Activated naive CD4-positive, alpha-beta T cell treated with anti-CD3 and anti-CD28 coated beads for 36 hours (primary cell): ENCODE measurements at regions of chr18 and their contacts with region 1.

Region 1: GRCh38 chr18:45974088-45974536 is 7.0 kb upstream of the EPG5 start:
- DNase-seq: peak; percentile 91
- H3K4me3 Mint-ChIP-seq: no peak overlapping the region
- H3K27ac Mint-ChIP-seq: peak overlapping the region; percentile 78
- H3K4me1 Mint-ChIP-seq: peaks cover 14% of the 10 kb centered on the region
- H3K27me3 Mint-ChIP-seq: no peaks in the 10 kb centered on the region

Region 2: GRCh38 chr18:45621061-45621511 is 353.0 kb before region 1 on chr18:
- CTCF ChIA-PET with region 1: no interaction called
- intact Hi-C with region 1: loop called (anchors 1 kb)
- DNase-seq: peak; percentile 51
- H3K4me3 Mint-ChIP-seq: no peak overlapping the region
- H3K27ac Mint-ChIP-seq: no peak overlapping the region
- H3K4me1 Mint-ChIP-seq: no peaks in the 10 kb centered on the region
- H3K27me3 Mint-ChIP-seq: no peaks in the 10 kb centered on the region

Region 3: DNA sequence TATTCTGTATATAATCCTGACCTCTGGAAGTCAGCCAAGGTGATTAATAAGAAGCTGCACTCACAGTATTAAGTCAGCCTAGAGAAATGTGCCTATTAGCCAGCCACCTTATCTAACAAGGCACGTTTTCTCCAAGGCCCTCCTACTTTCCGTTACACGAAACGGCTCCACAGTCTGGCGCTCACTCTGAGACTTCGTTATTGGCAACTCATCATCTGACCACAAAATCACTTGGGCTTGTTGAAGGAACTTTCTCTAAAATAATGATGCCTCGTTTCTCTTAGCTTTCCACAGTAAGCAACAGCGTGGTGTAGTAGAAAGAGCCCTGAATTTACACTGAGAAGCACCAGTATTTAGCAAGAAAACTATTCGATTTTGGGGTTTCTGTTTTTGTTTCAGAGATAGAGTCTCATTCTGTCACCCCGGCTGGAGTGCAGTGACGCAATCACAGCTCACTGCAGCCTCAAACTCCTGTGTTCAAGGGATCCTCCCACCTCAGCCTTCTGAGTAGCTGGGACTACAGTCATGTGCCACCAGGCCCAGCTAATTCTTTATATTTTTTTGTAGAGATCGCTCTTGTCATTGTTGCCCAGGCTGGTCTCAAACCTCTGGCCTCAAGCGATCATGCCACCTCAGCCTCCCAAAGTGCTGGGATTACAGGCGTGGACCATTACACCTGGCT is 303.7 kb before region 1 on chr18:
- CTCF ChIA-PET with region 1: interaction called, 18 read pairs
- intact Hi-C with region 1: loop called (anchors 1 kb)
- DNase-seq: peak; percentile 76
- H3K4me3 Mint-ChIP-seq: peak overlapping the region; percentile 56
- H3K27ac Mint-ChIP-seq: peak overlapping the region; percentile 81
- H3K4me1 Mint-ChIP-seq: peaks cover 61% of the 10 kb centered on the region
- H3K27me3 Mint-ChIP-seq: no peaks in the 10 kb centered on the region

Region 4: DNA sequence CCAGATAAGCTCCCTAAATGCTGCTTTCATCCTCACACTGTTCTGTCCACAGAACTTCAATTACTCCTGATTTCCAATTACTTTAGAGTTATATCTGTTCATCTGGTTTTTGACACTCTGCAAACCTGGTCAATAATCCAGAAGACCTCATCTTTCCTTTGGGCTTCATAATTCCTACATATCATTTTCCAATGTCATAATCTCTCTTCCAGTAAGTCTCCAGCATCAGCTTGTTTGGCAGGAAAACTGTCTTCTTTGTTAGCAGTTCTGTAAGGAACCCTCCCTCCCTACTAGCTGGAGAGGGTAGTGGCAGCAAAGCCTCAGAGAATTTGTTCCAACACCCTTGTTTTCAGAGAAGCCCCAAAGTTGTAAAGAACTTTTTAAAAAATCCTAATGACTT is 262.1 kb before region 1 on chr18:
- CTCF ChIA-PET with region 1: no interaction called
- intact Hi-C with region 1: no loop called
- DNase-seq: no peak
- H3K4me3 Mint-ChIP-seq: no peak overlapping the region
- H3K27ac Mint-ChIP-seq: no peak overlapping the region
- H3K4me1 Mint-ChIP-seq: no peaks in the 10 kb centered on the region
- H3K27me3 Mint-ChIP-seq: no peaks in the 10 kb centered on the region

Region 5: DNA sequence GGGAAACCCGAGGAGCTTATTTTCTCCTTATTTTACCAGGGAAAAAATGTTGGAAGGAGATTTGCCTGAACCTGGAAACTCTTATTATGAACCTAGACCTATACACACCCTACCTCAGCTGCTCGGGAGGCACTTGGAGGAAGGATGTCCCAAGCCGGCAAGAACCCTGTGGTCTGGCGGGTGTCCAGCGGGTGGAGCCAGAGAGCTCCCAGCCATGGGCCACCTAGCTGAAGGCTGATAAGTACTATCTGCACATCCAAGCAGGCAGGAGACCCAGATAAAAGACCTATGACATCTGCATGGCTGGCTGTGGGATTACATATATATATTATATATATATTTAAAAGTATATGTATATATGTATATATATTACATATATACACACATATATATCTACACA is 251.2 kb before region 1 on chr18:
- CTCF ChIA-PET with region 1: no interaction called
- intact Hi-C with region 1: loop called (anchors 1 kb)
- DNase-seq: peak; percentile 87
- H3K4me3 Mint-ChIP-seq: no peak overlapping the region
- H3K27ac Mint-ChIP-seq: no peak overlapping the region
- H3K4me1 Mint-ChIP-seq: no peaks in the 10 kb centered on the region
- H3K27me3 Mint-ChIP-seq: peaks cover 5% of the 10 kb centered on the region

Region 6: DNA sequence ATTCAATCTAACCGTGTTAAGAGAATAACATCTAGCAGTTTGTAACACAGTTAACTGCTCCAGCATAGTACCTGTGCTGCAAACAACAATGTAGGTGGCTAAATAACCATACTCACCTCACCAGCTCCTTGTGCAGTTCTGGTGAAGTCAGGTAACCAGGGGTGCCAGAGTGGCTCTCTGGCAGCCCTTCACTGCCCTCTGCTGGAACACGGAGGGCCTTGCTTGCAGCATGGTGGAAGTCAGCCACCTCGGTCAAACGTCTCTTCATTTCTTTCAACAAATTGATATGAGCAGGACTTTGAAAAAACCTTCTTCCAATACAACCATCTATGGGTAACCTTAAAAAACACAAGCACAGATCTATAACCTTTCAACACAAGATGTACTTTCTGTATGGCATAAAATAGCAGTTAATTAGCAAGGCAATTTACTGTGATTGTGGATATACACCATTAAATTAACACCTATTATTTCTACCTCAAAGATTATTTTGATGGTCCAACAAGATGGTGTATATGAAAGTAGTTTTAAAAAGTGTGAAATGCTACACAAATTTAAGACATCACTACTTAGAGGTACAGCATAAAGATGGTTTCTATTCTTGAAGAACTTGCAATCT is 63.6 kb before region 1 on chr18:
- CTCF ChIA-PET with region 1: interaction called, 3 read pairs
- intact Hi-C with region 1: loop called (anchors 2 kb)
- DNase-seq: peak; percentile 76
- H3K4me3 Mint-ChIP-seq: no peak overlapping the region
- H3K27ac Mint-ChIP-seq: no peak overlapping the region
- H3K4me1 Mint-ChIP-seq: no peaks in the 10 kb centered on the region
- H3K27me3 Mint-ChIP-seq: no peaks in the 10 kb centered on the region

Region 7: GRCh38 chr18:45935591-45936335 is 38.3 kb before region 1 on chr18:
- CTCF ChIA-PET with region 1: interaction called, 3 read pairs
- intact Hi-C with region 1: loop called (anchors 1 kb)
- DNase-seq: peak; percentile 7
- H3K4me3 Mint-ChIP-seq: no peak overlapping the region
- H3K27ac Mint-ChIP-seq: no peak overlapping the region
- H3K4me1 Mint-ChIP-seq: peaks cover 33% of the 10 kb centered on the region
- H3K27me3 Mint-ChIP-seq: no peaks in the 10 kb centered on the region

Region 8: GRCh38 chr18:46013484-46014189 is 39.5 kb after region 1 on chr18:
- CTCF ChIA-PET with region 1: interaction called, 3 read pairs
- intact Hi-C with region 1: loop called (anchors 1 kb)
- DNase-seq: no peak
- H3K4me3 Mint-ChIP-seq: no peak overlapping the region
- H3K27ac Mint-ChIP-seq: no peak overlapping the region
- H3K4me1 Mint-ChIP-seq: peaks cover 13% of the 10 kb centered on the region
- H3K27me3 Mint-ChIP-seq: no peaks in the 10 kb centered on the region

Region 9: DNA sequence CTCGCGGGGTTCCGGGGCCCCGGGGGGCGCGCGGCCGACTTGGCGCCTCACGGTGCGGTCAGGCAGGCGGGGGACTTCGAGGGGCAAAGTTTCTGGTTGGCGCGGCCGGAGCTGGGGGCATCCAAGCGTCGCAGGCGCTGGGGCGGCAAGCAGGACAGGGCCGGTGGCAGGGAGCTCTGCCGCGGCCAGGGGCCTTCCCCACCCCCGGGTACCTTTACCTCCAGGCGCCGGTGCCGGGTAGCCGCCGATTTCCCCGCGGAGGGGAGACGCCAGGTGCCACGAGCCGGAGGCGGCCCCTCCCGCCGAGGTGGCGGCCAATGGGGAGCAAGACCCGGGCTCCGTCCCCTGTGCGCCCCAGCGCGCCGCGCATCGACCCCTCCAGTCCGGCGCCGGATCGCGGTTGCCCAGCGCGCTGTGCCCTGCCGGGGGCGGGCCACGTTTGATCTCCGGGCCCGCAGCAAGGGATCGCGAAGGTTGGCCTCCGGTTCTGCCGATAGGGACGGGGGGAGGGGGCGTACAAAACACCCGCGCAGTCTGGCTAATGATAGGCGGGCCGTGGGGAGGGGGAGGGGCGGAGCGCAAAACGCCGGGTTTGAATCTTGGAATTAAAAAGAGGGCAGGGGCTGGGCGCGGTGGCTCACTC is 782.6 kb after region 1 on chr18 and contains the start of gene ST8SIA5:
- CTCF ChIA-PET with region 1: no interaction called
- intact Hi-C with region 1: no loop called
- DNase-seq: no peak
- H3K4me3 Mint-ChIP-seq: peak within 1 kb of the TSS; percentile 53
- H3K27ac Mint-ChIP-seq: no peak within 1 kb of the TSS
- H3K4me1 Mint-ChIP-seq: peaks cover 16% of the 10 kb centered on the region
- H3K27me3 Mint-ChIP-seq: peaks cover 59% of the 10 kb centered on the region
- total RNA-seq, gene ST8SIA5: not detected